B cell (primary cell): ENCODE measurements at regions of chr16 and their contacts with region 1.

Region 1: DNA sequence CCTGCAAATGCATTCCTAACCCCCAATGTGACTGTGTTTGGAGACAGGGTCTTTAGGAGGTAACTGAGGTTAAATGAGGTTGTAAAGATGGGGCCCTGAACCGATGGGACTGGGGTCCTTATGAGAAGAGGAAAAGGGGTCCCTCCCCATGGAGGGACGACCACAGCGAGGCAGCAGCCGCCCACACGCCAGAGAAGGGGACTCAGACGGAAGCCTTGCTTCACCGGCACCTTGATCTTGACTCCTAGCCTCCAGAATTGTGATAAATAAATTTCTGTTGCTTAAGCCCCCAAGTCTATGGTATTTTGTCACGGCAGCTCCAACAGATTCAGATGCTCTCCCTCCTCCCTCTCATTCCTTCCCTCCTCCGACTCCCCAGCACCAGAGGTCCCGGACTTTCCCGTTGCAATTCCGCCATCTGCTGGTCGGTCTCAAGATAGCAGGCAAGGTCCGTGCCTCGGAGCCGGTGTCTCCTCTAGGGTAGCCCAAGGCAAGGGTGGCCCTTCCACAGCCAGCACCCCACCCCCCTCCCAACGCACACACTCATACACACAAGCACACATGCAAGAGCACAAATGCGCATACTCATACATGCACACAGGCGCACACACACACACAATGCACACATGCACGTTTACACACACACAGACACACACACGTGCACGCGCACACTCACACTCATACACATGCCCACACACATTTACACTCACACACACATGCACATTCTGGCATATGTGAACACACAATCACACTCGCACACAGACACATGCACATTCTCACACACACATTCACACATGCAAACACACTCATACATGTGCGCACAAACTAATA is 23.1 kb upstream of the C16orf78 start:
- DNase-seq: peak; percentile 36
- ATAC-seq: no peak
- H3K4me3 ChIP-seq: no peak overlapping the region
- H3K4me3 Mint-ChIP-seq: no peak overlapping the region
- H3K27ac ChIP-seq: no peak overlapping the region
- H3K27ac Mint-ChIP-seq: no peak overlapping the region
- H3K4me1 ChIP-seq: no peaks in the 10 kb centered on the region
- H3K4me1 Mint-ChIP-seq: no peaks in the 10 kb centered on the region
- H3K27me3 ChIP-seq: peaks cover 0 to 5% (median 1%) of the 10 kb centered on the region in 4 experiments
- H3K27me3 Mint-ChIP-seq: peaks cover 43% of the 10 kb centered on the region
- CTCF ChIP-seq: peak; percentile 72

Region 2: GRCh38 chr16:48687421-48688038 is 663.0 kb before region 1 on chr16:
- CTCF ChIA-PET with region 1: no interaction called
- POLR2A ChIA-PET with region 1: no interaction called
- intact Hi-C with region 1: loop called (anchors 5 kb)
- DNase-seq: peak; percentile 14
- ATAC-seq: no peak
- H3K4me3 ChIP-seq: no peak overlapping the region
- H3K4me3 Mint-ChIP-seq: no peak overlapping the region
- H3K27ac ChIP-seq: no peak overlapping the region
- H3K27ac Mint-ChIP-seq: no peak overlapping the region
- H3K4me1 ChIP-seq: no peaks in the 10 kb centered on the region
- H3K4me1 Mint-ChIP-seq: no peaks in the 10 kb centered on the region
- H3K27me3 ChIP-seq: peaks cover 0 to 5% (median 3%) of the 10 kb centered on the region in 4 experiments
- H3K27me3 Mint-ChIP-seq: peaks cover 36% of the 10 kb centered on the region
- CTCF ChIP-seq: peak; percentile 49

Region 3: GRCh38 chr16:48911700-48912099 is 438.8 kb before region 1 on chr16:
- CTCF ChIA-PET with region 1: no interaction called
- POLR2A ChIA-PET with region 1: no interaction called
- intact Hi-C with region 1: no loop called
- DNase-seq: no peak
- ATAC-seq: no peak
- H3K4me3 ChIP-seq: no peak overlapping the region
- H3K4me3 Mint-ChIP-seq: no peak overlapping the region
- H3K27ac ChIP-seq: no peak overlapping the region
- H3K27ac Mint-ChIP-seq: no peak overlapping the region
- H3K4me1 ChIP-seq: no peaks in the 10 kb centered on the region
- H3K4me1 Mint-ChIP-seq: no peaks in the 10 kb centered on the region
- H3K27me3 ChIP-seq: no peaks in the 10 kb centered on the region
- H3K27me3 Mint-ChIP-seq: no peaks in the 10 kb centered on the region
- CTCF ChIP-seq: no peak

Region 4: GRCh38 chr16:49281843-49282642 is 68.4 kb before region 1 on chr16:
- CTCF ChIA-PET with region 1: no interaction called
- POLR2A ChIA-PET with region 1: no interaction called
- intact Hi-C with region 1: no loop called
- DNase-seq: peak; percentile 18
- ATAC-seq: peak; percentile 54
- H3K4me3 ChIP-seq: no peak overlapping the region
- H3K4me3 Mint-ChIP-seq: peak overlapping the region; percentile 73
- H3K27ac ChIP-seq: no peak overlapping the region
- H3K27ac Mint-ChIP-seq: no peak overlapping the region
- H3K4me1 ChIP-seq: peaks cover 0 to 6% of the 10 kb centered on the region in 2 donors
- H3K4me1 Mint-ChIP-seq: peaks cover 12% of the 10 kb centered on the region
- H3K27me3 ChIP-seq: peaks cover 0 to 59% (median 26%) of the 10 kb centered on the region in 4 experiments
- H3K27me3 Mint-ChIP-seq: peaks cover 63% of the 10 kb centered on the region
- CTCF ChIP-seq: no peak

Region 5: DNA sequence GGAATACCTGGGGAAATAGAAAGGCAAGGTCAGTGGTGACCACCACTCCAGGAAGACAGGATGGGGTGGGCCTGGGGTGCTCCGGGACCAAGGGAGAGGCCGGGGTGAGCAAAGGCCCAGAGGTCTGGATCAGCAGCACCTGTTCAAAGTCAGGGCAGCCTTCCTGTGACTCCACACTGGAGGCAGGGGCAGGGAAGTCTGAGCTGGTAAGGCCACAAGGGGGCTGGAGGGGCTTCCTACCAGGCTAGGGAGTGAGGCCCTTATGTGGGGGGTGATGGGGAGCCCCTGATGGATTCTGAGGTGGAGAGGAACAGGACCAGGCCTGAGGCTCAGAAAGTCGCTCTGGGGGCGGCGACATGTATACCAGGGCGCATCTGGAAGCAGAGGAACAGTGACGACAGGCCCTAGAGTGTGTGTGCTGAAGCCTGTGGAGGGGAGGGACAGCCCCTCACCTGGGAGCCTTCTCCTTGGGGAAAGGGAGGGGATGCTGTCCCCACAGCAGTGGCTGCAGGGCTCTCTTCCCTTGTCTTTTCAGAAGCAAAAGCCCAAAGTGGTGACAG is 26.8 kb after region 1 on chr16:
- CTCF ChIA-PET with region 1: no interaction called
- POLR2A ChIA-PET with region 1: no interaction called
- intact Hi-C with region 1: no loop called
- DNase-seq: no peak
- ATAC-seq: no peak
- H3K4me3 ChIP-seq: no peak overlapping the region
- H3K4me3 Mint-ChIP-seq: no peak overlapping the region
- H3K27ac ChIP-seq: no peak overlapping the region
- H3K27ac Mint-ChIP-seq: no peak overlapping the region
- H3K4me1 ChIP-seq: no peaks in the 10 kb centered on the region
- H3K4me1 Mint-ChIP-seq: no peaks in the 10 kb centered on the region
- H3K27me3 ChIP-seq: peaks cover 0 to 5% (median 2%) of the 10 kb centered on the region in 4 experiments
- H3K27me3 Mint-ChIP-seq: peaks cover 2% of the 10 kb centered on the region
- CTCF ChIP-seq: no peak